T-cell (primary cell): ENCODE measurements at regions of chr7 and their contacts with region 1.

Region 1: GRCh38 chr7:100705753-100706671 is at the start of gene POP7:
- DNase-seq: peak; percentile 93 to 99 (median 97)
- ATAC-seq: peak; percentile 96 to 98 (median 96)
- H3K4me3 ChIP-seq: peak within 1 kb of the TSS; percentile 87 to 100
- H3K4me3 Mint-ChIP-seq: peak within 1 kb of the TSS; percentile 88 to 95 (median 92)
- H3K27ac ChIP-seq: peak within 1 kb of the TSS; percentile 83
- H3K27ac Mint-ChIP-seq: peak within 1 kb of the TSS; percentile 90 to 94
- H3K4me1 ChIP-seq: peaks cover 5 to 25% of the 10 kb centered on the region in 2 experiments
- H3K4me1 Mint-ChIP-seq: peaks cover 14 to 19% (median 19%) of the 10 kb centered on the region in 3 donors
- H3K27me3 ChIP-seq: peaks cover 0 to 1% of the 10 kb centered on the region in 2 experiments
- H3K27me3 Mint-ChIP-seq: no peaks in the 10 kb centered on the region
- total RNA-seq, gene POP7: 8.3 to 18.1 (median 17.8) TPM

Region 2: GRCh38 chr7:100586266-100587025 is 119.6 kb before region 1 on chr7 and contains the start of gene FBXO24:
- CTCF ChIA-PET with region 1: interaction called, 3 to 21 read pairs
- POLR2A ChIA-PET with region 1: no interaction called
- DNase-seq: peak; percentile 98 to 100 (median 99)
- ATAC-seq: peak; percentile 79 to 85 (median 81)
- H3K4me3 ChIP-seq: peak within 1 kb of the TSS; percentile 73 to 94
- H3K4me3 Mint-ChIP-seq: peak within 1 kb of the TSS in 2 of 3 donors; percentile 96 to 97
- H3K27ac ChIP-seq: peak within 1 kb of the TSS; percentile 90
- H3K27ac Mint-ChIP-seq: peak within 1 kb of the TSS; percentile 95 to 97
- H3K4me1 ChIP-seq: peaks cover 18 to 49% of the 10 kb centered on the region in 2 experiments
- H3K4me1 Mint-ChIP-seq: peaks cover 18 to 35% (median 32%) of the 10 kb centered on the region in 3 donors
- H3K27me3 ChIP-seq: peaks cover 0 to 15% of the 10 kb centered on the region in 2 experiments
- H3K27me3 Mint-ChIP-seq: peaks cover 0 to 2% of the 10 kb centered on the region in 2 donors
- total RNA-seq, gene FBXO24: 0.70 to 1.7 (median 1.3) TPM

Region 3: GRCh38 chr7:100691676-100692577 is 14.1 kb before region 1 on chr7:
- CTCF ChIA-PET with region 1: interaction called, 8 to 14 read pairs
- POLR2A ChIA-PET with region 1: no interaction called
- DNase-seq: peak; percentile 56 to 89 (median 76)
- ATAC-seq: peak; percentile 66 to 70 (median 68)
- H3K4me3 ChIP-seq: peak overlapping the region in 1 of 2 donors; percentile 61
- H3K4me3 Mint-ChIP-seq: peak overlapping the region; percentile 90 to 95 (median 91)
- H3K27ac ChIP-seq: no peak overlapping the region
- H3K27ac Mint-ChIP-seq: peak overlapping the region; percentile 71 to 87
- H3K4me1 ChIP-seq: peaks cover 19 to 59% of the 10 kb centered on the region in 2 experiments
- H3K4me1 Mint-ChIP-seq: peaks cover 38 to 41% (median 40%) of the 10 kb centered on the region in 3 donors
- H3K27me3 ChIP-seq: peaks cover 0 to 2% of the 10 kb centered on the region in 2 experiments
- H3K27me3 Mint-ChIP-seq: no peaks in the 10 kb centered on the region

Region 4: DNA sequence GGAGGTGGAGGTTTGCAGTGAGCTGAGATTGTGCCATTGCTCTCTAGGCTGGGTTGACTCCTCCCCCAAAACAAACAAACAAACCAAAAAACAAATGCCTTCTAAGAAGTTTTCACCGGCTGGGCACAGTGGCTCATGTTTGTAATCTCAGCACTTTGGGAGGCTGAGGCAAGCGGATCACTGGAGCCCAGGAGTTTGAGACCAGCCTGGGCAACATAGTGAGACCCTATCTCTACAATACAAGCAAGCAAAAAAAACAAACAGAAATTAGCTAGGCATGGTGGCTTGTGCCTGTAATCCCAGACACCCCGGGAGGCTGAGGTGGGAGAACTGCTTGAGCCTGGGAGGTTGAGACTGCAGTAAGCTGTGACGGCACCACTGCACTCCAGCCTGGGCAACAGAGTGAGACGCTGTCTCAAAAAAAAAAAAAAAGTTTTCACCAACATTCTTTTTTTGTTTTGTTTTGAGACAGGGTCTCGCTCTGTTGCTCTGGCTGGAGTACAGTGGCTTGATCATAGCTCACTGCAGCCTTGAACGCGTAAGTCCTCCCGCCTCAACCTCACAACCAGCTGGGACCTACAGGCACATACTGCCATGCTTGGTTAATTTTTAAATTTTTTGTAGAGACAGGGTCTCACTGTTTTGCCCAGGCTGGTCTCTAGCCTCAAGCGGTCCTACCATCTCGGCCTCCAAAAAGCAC is 26.1 kb after region 1 on chr7:
- CTCF ChIA-PET with region 1: no interaction called
- POLR2A ChIA-PET with region 1: no interaction called
- DNase-seq: no peak
- ATAC-seq: no peak
- H3K4me3 ChIP-seq: no peak overlapping the region
- H3K4me3 Mint-ChIP-seq: no peak overlapping the region
- H3K27ac ChIP-seq: no peak overlapping the region
- H3K27ac Mint-ChIP-seq: no peak overlapping the region
- H3K4me1 ChIP-seq: no peaks in the 10 kb centered on the region
- H3K4me1 Mint-ChIP-seq: peaks cover 2 to 7% (median 5%) of the 10 kb centered on the region in 3 donors
- H3K27me3 ChIP-seq: peaks cover 0 to 39% of the 10 kb centered on the region in 2 experiments
- H3K27me3 Mint-ChIP-seq: peaks cover 10 to 34% of the 10 kb centered on the region in 2 donors

Region 5: GRCh38 chr7:100763556-100764140 is 57.6 kb after region 1 on chr7:
- CTCF ChIA-PET with region 1: interaction called in 1 of 2 experiments, 10 read pairs
- POLR2A ChIA-PET with region 1: no interaction called
- DNase-seq: no peak
- ATAC-seq: no peak
- H3K4me3 ChIP-seq: no peak overlapping the region
- H3K4me3 Mint-ChIP-seq: no peak overlapping the region
- H3K27ac ChIP-seq: no peak overlapping the region
- H3K27ac Mint-ChIP-seq: no peak overlapping the region
- H3K4me1 ChIP-seq: no peaks in the 10 kb centered on the region
- H3K4me1 Mint-ChIP-seq: no peaks in the 10 kb centered on the region
- H3K27me3 ChIP-seq: peaks cover 0 to 33% of the 10 kb centered on the region in 2 experiments
- H3K27me3 Mint-ChIP-seq: peaks cover 0 to 10% of the 10 kb centered on the region in 2 donors